ENCODE measurements at regions of chr2 and their contacts with region 1.

Region 1: DNA sequence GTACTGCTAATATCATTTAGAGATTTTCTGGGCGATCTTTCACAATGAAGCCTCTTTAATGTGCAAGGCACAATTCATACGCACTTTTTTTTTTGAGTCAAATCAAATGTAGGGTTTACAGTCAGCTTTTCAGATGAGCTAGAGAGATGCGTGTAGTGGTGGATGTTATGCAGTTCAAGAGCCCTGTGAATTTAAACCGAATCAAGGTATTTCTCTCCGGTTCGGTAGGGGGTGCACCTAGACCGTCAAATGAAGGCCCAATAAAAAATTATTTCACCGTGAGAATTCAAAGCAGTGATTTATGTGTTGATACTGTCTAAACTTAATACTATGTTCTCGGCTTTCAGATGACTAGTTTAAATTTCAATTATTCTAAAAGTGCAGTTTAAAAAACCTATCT is 1.1 kb downstream of the PTH2R start:
- DNase-seq: no peak
- H3K4me3 ChIP-seq: no peak overlapping the region
- H3K27ac ChIP-seq: no peak overlapping the region
- H3K4me1 ChIP-seq: peaks cover 5% of the 10 kb centered on the region
- H3K27me3 ChIP-seq: peaks cover 32% of the 10 kb centered on the region
- CTCF ChIP-seq: peak; percentile 11 to 39

Region 2: GRCh38 chr2:208000701-208001395 is 406.8 kb before region 1 on chr2:
- CTCF ChIA-PET with region 1: no interaction called
- dilution Hi-C with region 1: no loop called
- in situ Hi-C with region 1: no loop called
- intact Hi-C with region 1: no loop called
- DNase-seq: peak; percentile 4
- H3K4me3 ChIP-seq: no peak overlapping the region
- H3K27ac ChIP-seq: no peak overlapping the region
- H3K4me1 ChIP-seq: peaks cover 7% of the 10 kb centered on the region
- H3K27me3 ChIP-seq: no peaks in the 10 kb centered on the region
- CTCF ChIP-seq: no peak

Region 3: GRCh38 chr2:208466151-208466919 is 58.7 kb after region 1 on chr2:
- CTCF ChIA-PET with region 1: no interaction called
- dilution Hi-C with region 1: no loop called
- in situ Hi-C with region 1: no loop called
- intact Hi-C with region 1: no loop called
- DNase-seq: peak; percentile 38
- H3K4me3 ChIP-seq: no peak overlapping the region
- H3K27ac ChIP-seq: no peak overlapping the region
- H3K4me1 ChIP-seq: no peaks in the 10 kb centered on the region
- H3K27me3 ChIP-seq: peaks cover 2% of the 10 kb centered on the region
- CTCF ChIP-seq: peak; percentile 68 to 84

Region 4: DNA sequence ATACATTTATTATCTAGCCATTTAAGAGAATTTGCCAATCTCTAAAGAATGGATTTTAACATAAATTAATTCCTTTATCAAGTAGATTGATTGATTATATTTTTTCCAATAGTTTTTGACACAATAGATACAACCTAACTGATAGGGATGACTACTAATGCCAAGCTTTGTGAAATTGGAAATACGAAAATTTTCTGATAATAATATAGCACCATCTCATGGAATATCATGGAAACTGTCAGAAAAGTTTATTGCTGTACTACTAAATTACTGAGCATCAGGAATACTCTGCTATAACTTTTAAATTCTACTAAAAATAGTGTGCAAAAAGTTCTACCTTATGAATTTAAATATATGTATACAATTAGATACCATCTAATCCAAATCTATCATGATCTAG is 914.4 kb after region 1 on chr2:
- CTCF ChIA-PET with region 1: no interaction called
- dilution Hi-C with region 1: no loop called
- in situ Hi-C with region 1: loop called in 1 of 2 experiments (anchors 10 kb)
- intact Hi-C with region 1: no loop called
- DNase-seq: no peak
- H3K4me3 ChIP-seq: no peak overlapping the region
- H3K27ac ChIP-seq: no peak overlapping the region
- H3K4me1 ChIP-seq: no peaks in the 10 kb centered on the region
- H3K27me3 ChIP-seq: peaks cover 4% of the 10 kb centered on the region
- CTCF ChIP-seq: peak in 1 of 2 donors; percentile 5

Region 5: GRCh38 chr2:209556354-209556961 is 1148.8 kb after region 1 on chr2:
- CTCF ChIA-PET with region 1: no interaction called
- dilution Hi-C with region 1: no loop called
- in situ Hi-C with region 1: loop called in 1 of 2 experiments (anchors 25 kb)
- intact Hi-C with region 1: no loop called
- DNase-seq: peak; percentile 40
- H3K4me3 ChIP-seq: no peak overlapping the region
- H3K27ac ChIP-seq: no peak overlapping the region
- H3K4me1 ChIP-seq: no peaks in the 10 kb centered on the region
- H3K27me3 ChIP-seq: no peaks in the 10 kb centered on the region
- CTCF ChIP-seq: peak; percentile 42 to 74